Activated CD4-positive, alpha-beta T cell treated with anti-CD3 and anti-CD28 coated beads, Interleukin-2, amount 10 ng/mL, durations not matched to agents 24 days and 14 days (primary cell): ENCODE measurements at regions of chr6 and their contacts with region 1.

Region 1: DNA sequence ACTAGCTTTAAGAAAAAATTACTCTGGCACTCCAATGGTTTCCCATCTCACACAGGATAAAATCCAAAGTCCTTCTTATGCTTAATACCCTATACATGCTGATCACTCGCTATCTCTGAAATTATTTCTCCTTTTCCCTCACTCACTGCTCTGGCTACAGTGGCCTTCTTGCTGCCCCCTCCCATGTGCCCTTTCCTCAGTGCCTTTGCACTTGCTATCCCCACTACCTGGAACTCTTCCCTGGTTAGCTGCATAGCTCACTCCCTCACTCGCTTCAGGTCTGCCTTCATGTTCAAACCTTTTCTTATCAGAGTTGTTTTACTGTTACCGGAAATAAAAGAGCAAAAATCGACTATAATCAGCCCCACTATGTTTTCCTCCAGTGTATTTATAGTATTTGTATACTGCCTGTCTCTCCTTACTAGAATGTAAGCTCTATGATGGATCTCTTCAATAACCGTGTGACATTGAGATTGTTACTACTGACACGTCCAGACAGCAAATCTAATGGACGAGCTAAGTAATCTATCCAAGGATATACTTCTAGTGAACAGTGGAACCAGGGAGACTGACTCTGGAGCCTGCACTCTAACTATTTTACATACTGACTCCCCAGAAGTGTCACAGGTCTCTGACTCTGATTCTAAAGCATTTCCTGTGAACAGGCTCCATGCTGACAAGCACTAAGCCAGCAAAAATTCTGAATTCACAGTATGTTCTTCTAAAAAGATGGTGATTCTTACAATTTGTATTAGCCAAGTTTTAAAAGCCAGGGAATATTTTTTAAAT is 25.1 kb downstream of the FKBP5 start:
- DNase-seq: peak; percentile 71
- H3K4me3 Mint-ChIP-seq: no peak overlapping the region
- H3K27ac Mint-ChIP-seq: no peak overlapping the region
- H3K4me1 Mint-ChIP-seq: peaks cover 8% of the 10 kb centered on the region
- H3K27me3 Mint-ChIP-seq: no peaks in the 10 kb centered on the region

Region 2: DNA sequence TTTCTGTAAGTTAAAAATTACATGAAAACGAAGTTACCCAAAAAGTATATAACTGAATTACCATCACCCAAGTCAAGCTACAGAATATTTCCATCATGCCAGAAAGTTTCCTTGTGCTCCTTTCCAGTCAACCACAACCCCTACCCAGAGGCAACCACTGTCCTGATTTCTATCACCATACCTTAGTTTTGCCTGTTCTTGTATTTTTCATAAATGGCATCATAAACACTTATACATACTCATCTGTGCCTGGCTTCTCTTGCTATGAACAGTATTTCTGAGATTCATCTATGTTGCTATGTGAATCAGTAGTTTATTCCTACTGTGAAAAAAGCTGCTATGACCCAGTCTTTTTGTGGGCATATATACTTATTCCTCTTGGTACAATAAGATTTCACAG is 17.7 kb after region 1 on chr6:
- intact Hi-C with region 1: loop called (anchors 2 kb)
- DNase-seq: peak; percentile 57
- H3K4me3 Mint-ChIP-seq: no peak overlapping the region
- H3K27ac Mint-ChIP-seq: peak overlapping the region; percentile 10
- H3K4me1 Mint-ChIP-seq: peaks cover 41% of the 10 kb centered on the region
- H3K27me3 Mint-ChIP-seq: no peaks in the 10 kb centered on the region

Region 3: DNA sequence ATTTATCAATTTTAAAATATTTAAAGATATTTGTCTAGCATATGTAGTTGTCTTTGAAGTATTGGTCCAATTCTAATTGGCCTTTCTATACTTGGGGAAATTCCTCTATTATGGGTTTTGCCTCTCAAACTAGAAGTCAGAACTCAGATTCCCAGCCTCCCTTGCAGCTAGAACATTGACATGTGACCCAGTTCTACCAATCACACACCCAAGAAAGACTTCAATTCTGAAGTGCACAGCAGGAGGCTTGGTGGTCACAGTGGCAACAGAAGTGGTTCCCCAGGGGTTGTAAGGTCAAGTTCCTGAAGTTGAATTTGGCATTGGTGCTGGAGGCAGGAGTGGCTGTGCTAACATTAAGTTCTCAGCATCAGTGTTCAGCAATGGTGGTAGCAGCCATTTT is 39.9 kb after region 1 on chr6:
- intact Hi-C with region 1: no loop called
- DNase-seq: no peak
- H3K4me3 Mint-ChIP-seq: no peak overlapping the region
- H3K27ac Mint-ChIP-seq: no peak overlapping the region
- H3K4me1 Mint-ChIP-seq: peaks cover 9% of the 10 kb centered on the region
- H3K27me3 Mint-ChIP-seq: no peaks in the 10 kb centered on the region